Caco-2 (cell line): ENCODE measurements at regions of chr20 and their contacts with region 1.

Region 1: DNA sequence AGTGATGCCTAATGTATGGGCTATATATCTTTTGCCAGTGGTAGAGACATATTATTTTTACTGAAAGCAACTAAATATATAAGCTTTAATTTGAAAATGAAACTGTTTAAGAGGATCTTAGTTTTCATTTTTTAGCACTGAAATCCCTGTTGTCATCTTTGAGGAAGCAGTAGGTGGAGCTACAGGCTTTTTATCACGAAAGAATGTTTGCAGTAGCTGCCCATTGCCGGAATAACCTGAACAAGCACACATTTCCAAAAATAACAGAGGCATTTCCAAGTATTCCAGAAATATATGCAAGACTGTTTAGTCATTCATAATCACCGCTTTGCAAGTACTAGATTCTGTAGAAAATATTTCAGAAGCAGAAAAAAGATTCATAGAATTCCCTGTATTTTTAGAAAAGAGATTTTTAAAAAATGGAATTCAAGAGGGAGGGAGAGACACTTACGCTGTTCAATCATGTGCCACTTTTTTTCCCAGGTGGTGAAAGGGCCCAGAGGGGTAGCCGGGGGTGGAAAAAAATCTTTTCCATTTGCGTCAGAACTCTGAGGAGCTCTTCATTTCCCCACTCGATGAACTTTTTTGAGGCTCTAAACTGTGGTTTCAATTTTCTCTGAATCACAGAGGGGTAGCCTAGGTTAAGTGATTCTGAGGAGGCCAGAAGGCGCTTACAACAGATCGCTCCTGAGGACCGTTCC is 142.5 kb upstream of the FERMT1 start:
- DNase-seq: peak in 1 of 2 experiments; percentile 22
- H3K4me3 ChIP-seq: no peak overlapping the region
- H3K4me3 Mint-ChIP-seq: no peak overlapping the region
- H3K27ac Mint-ChIP-seq: no peak overlapping the region
- H3K4me1 ChIP-seq: no peaks in the 10 kb centered on the region
- H3K4me1 Mint-ChIP-seq: no peaks in the 10 kb centered on the region
- H3K27me3 ChIP-seq: no peaks in the 10 kb centered on the region; the same call in 1 of the 2 replicates
- H3K27me3 Mint-ChIP-seq: peaks cover 10% of the 10 kb centered on the region
- CTCF ChIP-seq: peak; percentile 48 to 62

Region 2: GRCh38 chr20:6142348-6142993 is 122.9 kb before region 1 on chr20:
- CTCF ChIA-PET with region 1: no interaction called
- POLR2A ChIA-PET with region 1: no interaction called
- intact Hi-C with region 1: loop called (anchors 10 kb)
- DNase-seq: peak; percentile 54 to 67
- H3K4me3 ChIP-seq: no peak overlapping the region
- H3K4me3 Mint-ChIP-seq: no peak overlapping the region
- H3K27ac Mint-ChIP-seq: no peak overlapping the region
- H3K4me1 ChIP-seq: no peaks in the 10 kb centered on the region
- H3K4me1 Mint-ChIP-seq: no peaks in the 10 kb centered on the region
- H3K27me3 ChIP-seq: no peaks in the 10 kb centered on the region; the same call in 1 of the 2 replicates
- H3K27me3 Mint-ChIP-seq: peaks cover under 1% of the 10 kb centered on the region
- CTCF ChIP-seq: peak; percentile 71 to 84

Region 3: GRCh38 chr20:6355754-6356451 is 90.5 kb after region 1 on chr20:
- CTCF ChIA-PET with region 1: no interaction called
- POLR2A ChIA-PET with region 1: no interaction called
- intact Hi-C with region 1: no loop called
- DNase-seq: no peak
- H3K4me3 ChIP-seq: no peak overlapping the region
- H3K4me3 Mint-ChIP-seq: no peak overlapping the region
- H3K27ac Mint-ChIP-seq: no peak overlapping the region
- H3K4me1 ChIP-seq: no peaks in the 10 kb centered on the region
- H3K4me1 Mint-ChIP-seq: no peaks in the 10 kb centered on the region
- H3K27me3 ChIP-seq: no peaks in the 10 kb centered on the region
- H3K27me3 Mint-ChIP-seq: no peaks in the 10 kb centered on the region
- CTCF ChIP-seq: no peak

Region 4: GRCh38 chr20:6819605-6820004 is 554.3 kb after region 1 on chr20:
- CTCF ChIA-PET with region 1: interaction called, 4 read pairs
- POLR2A ChIA-PET with region 1: no interaction called
- intact Hi-C with region 1: loop called (anchors 1 kb)
- DNase-seq: peak; percentile 49 to 52
- H3K4me3 ChIP-seq: no peak overlapping the region
- H3K4me3 Mint-ChIP-seq: no peak overlapping the region
- H3K27ac Mint-ChIP-seq: no peak overlapping the region
- H3K4me1 ChIP-seq: no peaks in the 10 kb centered on the region
- H3K4me1 Mint-ChIP-seq: no peaks in the 10 kb centered on the region
- H3K27me3 ChIP-seq: no peaks in the 10 kb centered on the region
- H3K27me3 Mint-ChIP-seq: no peaks in the 10 kb centered on the region
- CTCF ChIP-seq: peak; percentile 46